H1 (cell line): ENCODE measurements at regions of chr13 and their contacts with region 1.

Region 1: DNA sequence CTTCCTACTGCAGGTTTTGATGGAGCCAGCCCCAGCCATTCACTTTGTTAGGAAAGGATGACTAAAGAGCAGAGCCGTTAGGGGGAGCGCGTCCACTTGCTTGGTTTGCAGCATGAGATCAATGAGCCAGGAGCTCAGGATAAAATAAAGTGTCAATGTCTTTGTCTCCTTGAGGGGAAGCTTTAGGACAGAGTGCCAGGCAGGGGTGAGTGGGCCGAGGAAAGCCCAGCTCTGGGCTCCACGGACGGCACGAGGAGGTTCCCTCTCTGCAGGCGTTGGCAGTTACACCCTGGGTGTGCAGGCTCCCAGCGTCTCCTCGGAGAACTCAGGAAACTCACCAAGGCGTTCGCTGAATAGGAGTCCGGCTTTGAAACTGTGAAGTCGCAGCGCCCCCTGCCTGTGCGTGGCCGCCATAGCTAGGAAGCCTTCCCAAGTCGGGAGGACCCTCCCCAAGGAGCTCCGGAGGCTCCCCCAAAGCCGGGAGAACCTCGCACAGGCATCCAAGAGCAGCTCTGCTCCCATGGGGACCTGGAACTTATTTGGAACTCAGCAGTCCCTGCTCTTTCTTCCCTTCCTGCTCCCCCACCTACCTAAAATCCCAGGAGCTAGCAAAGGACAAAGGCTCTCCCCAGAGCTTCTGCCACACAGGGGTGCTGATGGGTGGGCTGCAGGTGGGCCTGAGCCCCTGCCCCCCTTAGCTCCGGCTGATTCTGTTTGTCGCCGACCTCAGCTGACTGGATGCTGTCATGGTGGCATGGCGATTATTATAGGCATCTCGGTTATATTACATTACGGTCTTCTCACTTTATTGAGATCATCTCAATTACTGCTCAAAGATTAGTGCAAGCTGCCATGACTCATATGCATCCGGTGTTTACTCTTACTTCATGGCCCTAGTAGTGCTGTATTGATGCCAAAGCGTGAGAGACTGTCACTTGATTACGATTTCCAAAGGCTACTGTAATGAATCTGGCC is 34.4 kb downstream of the GSX1 start:
- DNase-seq: peak; percentile 78 to 99
- H3K4me3 ChIP-seq: peak overlapping the region in 3 of 4 experiments; percentile 31 to 52 (median 40); a peak in 4 of 8 replicates
- H3K27ac ChIP-seq: no peak overlapping the region
- H3K4me1 ChIP-seq: peaks cover 7 to 19% (median 11%) of the 10 kb centered on the region in 4 experiments; a peak in 6 of 7 replicates
- H3K27me3 ChIP-seq: peaks cover 47 to 91% (median 78%) of the 10 kb centered on the region in 4 experiments
- CTCF ChIP-seq: peak; percentile 77 to 96 (median 95)
- EP300 ChIP-seq: no peak
- POLR2A ChIP-seq: no peak
- RAD21 ChIP-seq: peak; percentile 94 to 96

Region 2: DNA sequence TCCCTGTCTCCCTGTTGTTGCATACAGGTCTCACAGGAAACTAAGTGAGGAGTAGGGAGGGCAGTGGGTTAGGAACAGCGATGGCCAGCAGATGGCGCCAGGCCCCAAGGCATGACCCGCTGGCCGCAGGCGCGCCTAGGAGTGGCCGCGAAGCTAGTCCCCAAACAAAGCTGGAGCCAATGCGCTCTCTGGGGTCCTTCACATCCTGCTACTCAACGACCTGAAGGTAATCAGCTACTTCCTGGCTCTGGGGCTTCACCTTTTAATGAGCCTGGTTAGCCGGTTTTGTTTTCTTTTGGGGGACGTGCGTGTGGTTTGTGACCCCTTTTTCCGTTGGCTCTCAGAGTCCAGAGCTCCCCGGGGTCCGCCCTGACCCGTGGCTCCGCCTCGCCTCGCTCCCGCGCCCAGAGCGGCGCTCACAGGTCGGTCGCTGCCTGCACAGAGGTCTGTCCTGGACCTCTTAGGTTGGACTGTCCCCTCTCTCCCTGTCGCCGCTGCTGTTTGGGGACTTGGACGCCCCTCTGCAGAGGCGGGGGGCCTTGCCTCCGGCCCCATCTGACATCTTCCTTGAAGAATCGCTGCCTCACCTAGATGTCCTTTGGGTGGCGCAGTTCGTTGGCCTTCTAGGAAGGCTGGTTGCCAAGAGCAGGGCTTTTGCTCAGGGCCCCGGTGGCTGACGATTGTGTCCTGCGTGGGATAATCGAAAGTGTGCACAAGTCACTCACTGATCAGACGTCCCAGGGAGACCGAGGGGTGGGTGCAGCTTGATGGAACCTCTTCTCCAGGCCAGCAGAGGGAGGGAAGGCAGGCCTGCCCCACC is 464.4 kb before region 1 on chr13:
- CTCF ChIA-PET with region 1: interaction called, 31 read pairs
- POLR2A ChIA-PET with region 1: no interaction called
- DNase-seq: peak; percentile 87 to 95
- H3K4me3 ChIP-seq: peak overlapping the region; percentile 39 to 87 (median 78)
- H3K27ac ChIP-seq: no peak overlapping the region
- H3K4me1 ChIP-seq: peaks cover 2 to 8% (median 4%) of the 10 kb centered on the region in 4 experiments
- H3K27me3 ChIP-seq: peaks cover 0 to 8% (median 4%) of the 10 kb centered on the region in 4 experiments; a peak in 5 of 7 replicates
- CTCF ChIP-seq: peak; percentile 90 to 99 (median 98)
- EP300 ChIP-seq: no peak; a peak in 1 of 3 replicates
- POLR2A ChIP-seq: peak in 1 of 2 experiments; percentile 71; a peak in 1 of 3 replicates
- RAD21 ChIP-seq: peak; percentile 94 to 95

Region 3: GRCh38 chr13:27643334-27644132 is 183.1 kb before region 1 on chr13:
- CTCF ChIA-PET with region 1: interaction called, 10 read pairs
- POLR2A ChIA-PET with region 1: no interaction called
- DNase-seq: no peak
- H3K4me3 ChIP-seq: no peak overlapping the region
- H3K27ac ChIP-seq: no peak overlapping the region
- H3K4me1 ChIP-seq: peaks cover 0 to 6% (median 2%) of the 10 kb centered on the region in 4 experiments; a peak in 2 of 7 replicates
- H3K27me3 ChIP-seq: no peaks in the 10 kb centered on the region
- CTCF ChIP-seq: no peak
- EP300 ChIP-seq: no peak
- POLR2A ChIP-seq: no peak
- RAD21 ChIP-seq: no peak

Region 4: GRCh38 chr13:27744801-27745200 is 81.9 kb before region 1 on chr13:
- CTCF ChIA-PET with region 1: interaction called, 29 read pairs
- POLR2A ChIA-PET with region 1: no interaction called
- DNase-seq: peak in 1 of 2 experiments; percentile 47
- H3K4me3 ChIP-seq: peak overlapping the region in 1 of 4 experiments; percentile 33; a peak in 1 of 8 replicates
- H3K27ac ChIP-seq: no peak overlapping the region
- H3K4me1 ChIP-seq: peaks cover 8 to 14% (median 10%) of the 10 kb centered on the region in 4 experiments
- H3K27me3 ChIP-seq: no peaks in the 10 kb centered on the region; a peak in 1 of 7 replicates
- CTCF ChIP-seq: no peak
- EP300 ChIP-seq: no peak
- POLR2A ChIP-seq: no peak
- RAD21 ChIP-seq: no peak

Region 5: DNA sequence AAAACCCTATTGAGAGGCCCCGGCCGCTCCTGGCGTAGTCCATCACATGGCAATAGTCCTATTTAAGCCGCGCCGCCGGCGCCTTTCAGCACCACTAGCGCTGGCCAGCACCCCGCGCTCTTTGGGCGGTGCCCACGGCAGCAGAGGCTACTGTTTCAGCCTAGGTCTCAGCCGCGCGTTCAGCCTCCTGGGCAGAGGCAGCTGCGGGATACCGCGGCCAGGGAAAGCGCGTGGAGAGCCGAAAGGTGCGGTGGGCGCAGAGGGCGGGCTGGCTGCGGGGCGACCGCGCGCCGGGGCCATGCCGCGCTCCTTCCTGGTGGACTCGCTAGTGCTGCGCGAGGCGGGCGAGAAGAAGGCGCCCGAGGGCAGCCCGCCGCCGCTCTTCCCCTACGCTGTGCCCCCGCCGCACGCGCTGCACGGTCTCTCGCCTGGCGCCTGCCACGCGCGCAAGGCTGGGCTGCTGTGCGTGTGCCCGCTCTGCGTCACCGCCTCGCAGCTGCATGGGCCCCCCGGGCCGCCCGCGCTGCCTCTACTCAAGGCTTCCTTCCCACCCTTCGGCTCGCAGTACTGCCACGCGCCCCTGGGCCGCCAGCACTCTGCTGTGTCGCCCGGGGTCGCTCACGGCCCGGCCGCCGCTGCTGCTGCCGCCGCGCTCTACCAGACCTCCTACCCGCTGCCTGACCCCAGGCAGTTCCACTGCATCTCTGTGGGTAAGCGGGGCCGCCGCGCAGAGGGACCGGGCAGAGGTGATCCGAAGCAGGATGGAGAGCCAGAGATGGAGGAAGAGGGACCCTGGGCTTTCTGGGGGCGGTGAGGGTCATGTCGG is 34.1 kb before region 1 on chr13 and contains the start of gene GSX1:
- CTCF ChIA-PET with region 1: interaction called, 345 read pairs
- POLR2A ChIA-PET with region 1: interaction called, 5 read pairs
- DNase-seq: peak; percentile 63 to 87
- H3K4me3 ChIP-seq: peak within 1 kb of the TSS in 1 of 4 experiments; percentile 54; a peak in 3 of 8 replicates
- H3K27ac ChIP-seq: no peak within 1 kb of the TSS
- H3K4me1 ChIP-seq: peaks cover 10 to 55% (median 35%) of the 10 kb centered on the region in 4 experiments
- H3K27me3 ChIP-seq: peaks cover 95 to 100% (median 100%) of the 10 kb centered on the region in 4 experiments
- CTCF ChIP-seq: no peak
- EP300 ChIP-seq: no peak
- POLR2A ChIP-seq: no peak
- RAD21 ChIP-seq: peak in 1 of 2 experiments; percentile 4; a peak in 1 of 4 replicates
- total RNA-seq, gene GSX1: not detected in 2 replicates

Region 6: DNA sequence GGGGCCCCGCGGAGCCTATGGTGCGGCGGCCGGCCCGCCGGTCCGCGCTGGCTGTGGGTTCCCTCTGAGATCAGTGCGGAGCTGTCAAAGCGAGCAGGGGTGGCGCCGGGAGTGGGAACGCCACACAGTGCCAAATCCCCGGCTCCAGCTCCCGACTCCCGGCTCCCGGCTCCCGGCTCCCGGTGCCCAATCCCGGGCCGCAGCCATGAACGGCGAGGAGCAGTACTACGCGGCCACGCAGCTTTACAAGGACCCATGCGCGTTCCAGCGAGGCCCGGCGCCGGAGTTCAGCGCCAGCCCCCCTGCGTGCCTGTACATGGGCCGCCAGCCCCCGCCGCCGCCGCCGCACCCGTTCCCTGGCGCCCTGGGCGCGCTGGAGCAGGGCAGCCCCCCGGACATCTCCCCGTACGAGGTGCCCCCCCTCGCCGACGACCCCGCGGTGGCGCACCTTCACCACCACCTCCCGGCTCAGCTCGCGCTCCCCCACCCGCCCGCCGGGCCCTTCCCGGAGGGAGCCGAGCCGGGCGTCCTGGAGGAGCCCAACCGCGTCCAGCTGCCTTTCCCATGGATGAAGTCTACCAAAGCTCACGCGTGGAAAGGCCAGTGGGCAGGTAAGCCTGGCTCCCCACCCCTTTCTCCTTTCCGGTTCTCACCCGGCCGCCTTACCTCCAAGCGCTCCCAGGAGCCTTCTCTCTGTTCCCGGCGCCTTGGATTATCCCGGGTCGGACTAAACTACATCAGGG is 93.4 kb after region 1 on chr13 and contains the start of gene PDX1:
- CTCF ChIA-PET with region 1: interaction called, 18 read pairs
- POLR2A ChIA-PET with region 1: interaction called, 3 read pairs
- DNase-seq: peak in 1 of 2 experiments; percentile 81
- H3K4me3 ChIP-seq: peak within 1 kb of the TSS in 2 of 4 experiments; percentile 7 to 49; a peak in 4 of 8 replicates
- H3K27ac ChIP-seq: no peak within 1 kb of the TSS
- H3K4me1 ChIP-seq: peaks cover 8 to 34% (median 22%) of the 10 kb centered on the region in 4 experiments
- H3K27me3 ChIP-seq: peaks cover 97 to 100% (median 100%) of the 10 kb centered on the region in 4 experiments
- CTCF ChIP-seq: no peak
- EP300 ChIP-seq: no peak
- POLR2A ChIP-seq: no peak
- RAD21 ChIP-seq: no peak
- total RNA-seq, gene PDX1: not detected in 2 replicates

Region 7: GRCh38 chr13:27968316-27969081 is 141.8 kb after region 1 on chr13:
- CTCF ChIA-PET with region 1: interaction called, 49 read pairs
- POLR2A ChIA-PET with region 1: no interaction called
- DNase-seq: peak in 1 of 2 experiments; percentile 82
- H3K4me3 ChIP-seq: peak overlapping the region; percentile 19 to 51 (median 30); a peak in 6 of 8 replicates
- H3K27ac ChIP-seq: no peak overlapping the region
- H3K4me1 ChIP-seq: peaks cover 8 to 61% (median 38%) of the 10 kb centered on the region in 4 experiments
- H3K27me3 ChIP-seq: peaks cover 95 to 100% (median 98%) of the 10 kb centered on the region in 4 experiments
- CTCF ChIP-seq: peak in 1 of 3 experiments; percentile 22; a peak in 2 of 4 replicates
- EP300 ChIP-seq: no peak
- POLR2A ChIP-seq: no peak
- RAD21 ChIP-seq: no peak